Caco-2 (cell line): ENCODE measurements at regions of chr7 and their contacts with region 1.

Region 1: GRCh38 chr7:51430480-51431086 is 114.0 kb upstream of the COBL start:
- DNase-seq: peak; percentile 58 to 79
- H3K4me3 ChIP-seq: no peak overlapping the region
- H3K4me3 Mint-ChIP-seq: no peak overlapping the region
- H3K27ac Mint-ChIP-seq: no peak overlapping the region
- H3K4me1 ChIP-seq: no peaks in the 10 kb centered on the region
- H3K4me1 Mint-ChIP-seq: no peaks in the 10 kb centered on the region
- H3K27me3 ChIP-seq: no peaks in the 10 kb centered on the region; the same call in 1 of the 2 replicates
- H3K27me3 Mint-ChIP-seq: peaks cover 11% of the 10 kb centered on the region
- CTCF ChIP-seq: peak; percentile 82 to 90

Region 2: DNA sequence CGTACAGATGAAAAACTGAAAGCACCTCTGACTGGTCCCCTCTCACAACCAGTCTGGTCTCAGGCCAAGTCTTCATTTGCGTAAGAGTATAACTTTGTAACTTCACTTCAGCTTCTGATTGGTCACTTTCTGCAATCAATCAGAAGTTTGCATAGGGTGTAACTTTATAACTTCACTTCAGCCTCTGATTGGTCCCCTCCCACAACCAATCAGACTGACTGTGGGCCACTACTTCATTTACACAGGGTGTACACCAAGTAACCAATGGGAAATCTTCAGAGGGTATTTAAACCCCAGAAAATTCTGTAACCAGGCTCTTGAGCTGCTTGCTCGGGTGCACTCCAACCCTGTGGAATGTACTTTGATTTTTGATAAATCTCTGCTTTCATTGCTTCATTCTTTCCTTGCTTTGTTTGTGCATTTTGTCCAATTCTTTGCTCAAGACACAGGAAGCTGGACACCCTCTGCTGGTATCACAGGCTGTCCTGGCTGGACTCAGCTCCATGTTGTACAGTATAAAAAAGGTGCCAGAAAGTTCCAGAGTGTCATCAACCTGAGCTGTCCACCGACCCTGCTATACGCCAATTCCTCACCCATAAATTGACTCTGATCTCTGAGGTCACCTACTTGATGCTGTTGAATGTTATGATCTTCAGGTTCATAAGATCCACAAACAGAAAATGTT is 188.4 kb before region 1 on chr7:
- CTCF ChIA-PET with region 1: no interaction called
- POLR2A ChIA-PET with region 1: no interaction called
- intact Hi-C with region 1: no loop called
- DNase-seq: peak; percentile 46 to 53
- H3K4me3 ChIP-seq: no peak overlapping the region
- H3K4me3 Mint-ChIP-seq: no peak overlapping the region
- H3K27ac Mint-ChIP-seq: peak overlapping the region; percentile 3
- H3K4me1 ChIP-seq: peaks cover 36% of the 10 kb centered on the region
- H3K4me1 Mint-ChIP-seq: peaks cover 17% of the 10 kb centered on the region
- H3K27me3 ChIP-seq: no peaks in the 10 kb centered on the region
- H3K27me3 Mint-ChIP-seq: no peaks in the 10 kb centered on the region
- CTCF ChIP-seq: peak in 1 of 2 experiments; percentile 15

Region 3: GRCh38 chr7:51253161-51253560 is 177.4 kb before region 1 on chr7:
- CTCF ChIA-PET with region 1: no interaction called
- POLR2A ChIA-PET with region 1: no interaction called
- intact Hi-C with region 1: loop called (anchors 1 kb)
- DNase-seq: peak in 1 of 2 experiments; percentile 25
- H3K4me3 ChIP-seq: no peak overlapping the region
- H3K4me3 Mint-ChIP-seq: no peak overlapping the region
- H3K27ac Mint-ChIP-seq: no peak overlapping the region
- H3K4me1 ChIP-seq: peaks cover 37% of the 10 kb centered on the region
- H3K4me1 Mint-ChIP-seq: peaks cover 39% of the 10 kb centered on the region
- H3K27me3 ChIP-seq: no peaks in the 10 kb centered on the region
- H3K27me3 Mint-ChIP-seq: no peaks in the 10 kb centered on the region
- CTCF ChIP-seq: peak; percentile 28 to 36

Region 4: DNA sequence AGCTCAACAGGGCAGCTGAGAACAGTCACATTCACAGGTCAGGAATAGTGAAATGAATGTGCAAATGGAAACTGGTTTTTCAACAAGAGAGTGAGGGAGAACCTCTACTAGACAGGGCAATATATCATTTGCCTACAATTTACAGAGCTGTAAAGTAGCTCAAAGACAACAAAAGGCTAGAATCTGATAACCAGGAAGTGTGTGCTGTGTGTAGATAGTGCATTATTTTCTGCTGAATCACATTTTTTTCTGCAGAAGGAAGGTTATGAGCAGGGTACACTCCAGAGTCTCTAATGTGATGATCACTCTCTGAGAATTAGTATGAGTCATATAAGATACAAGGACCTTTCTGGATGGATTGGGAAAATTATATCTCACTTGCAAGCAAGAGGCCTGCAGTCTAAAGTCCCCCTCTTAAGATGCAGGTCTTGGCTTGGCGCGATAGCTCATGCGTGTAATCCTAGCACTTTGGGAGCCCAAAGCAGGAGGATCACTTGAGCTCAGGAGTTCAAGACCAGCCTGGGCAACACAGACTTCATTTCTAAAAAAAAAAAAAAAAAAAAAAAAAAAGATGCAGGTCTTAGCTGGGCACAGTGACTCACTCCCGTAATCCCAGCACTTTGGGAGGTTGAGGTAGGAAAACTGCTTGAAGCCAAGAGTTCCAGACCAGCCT is 54.0 kb before region 1 on chr7:
- CTCF ChIA-PET with region 1: interaction called, 11 read pairs
- POLR2A ChIA-PET with region 1: no interaction called
- intact Hi-C with region 1: no loop called
- DNase-seq: peak; percentile 74 to 79
- H3K4me3 ChIP-seq: no peak overlapping the region
- H3K4me3 Mint-ChIP-seq: peak overlapping the region; percentile 22
- H3K27ac Mint-ChIP-seq: peak overlapping the region; percentile 66
- H3K4me1 ChIP-seq: peaks cover 18% of the 10 kb centered on the region
- H3K4me1 Mint-ChIP-seq: peaks cover 9% of the 10 kb centered on the region
- H3K27me3 ChIP-seq: no peaks in the 10 kb centered on the region
- H3K27me3 Mint-ChIP-seq: no peaks in the 10 kb centered on the region
- CTCF ChIP-seq: no peak

Region 5: GRCh38 chr7:51666751-51667150 is 236.2 kb after region 1 on chr7:
- CTCF ChIA-PET with region 1: interaction called, 9 read pairs
- POLR2A ChIA-PET with region 1: no interaction called
- intact Hi-C with region 1: loop called (anchors 1 kb)
- DNase-seq: peak in 1 of 2 experiments; percentile 33
- H3K4me3 ChIP-seq: no peak overlapping the region
- H3K4me3 Mint-ChIP-seq: peak overlapping the region; percentile 48
- H3K27ac Mint-ChIP-seq: no peak overlapping the region
- H3K4me1 ChIP-seq: peaks cover 16% of the 10 kb centered on the region
- H3K4me1 Mint-ChIP-seq: peaks cover 8% of the 10 kb centered on the region
- H3K27me3 ChIP-seq: no peaks in the 10 kb centered on the region
- H3K27me3 Mint-ChIP-seq: peaks cover 2% of the 10 kb centered on the region
- CTCF ChIP-seq: no peak

Region 6: GRCh38 chr7:51693258-51693657 is 262.7 kb after region 1 on chr7:
- CTCF ChIA-PET with region 1: no interaction called
- POLR2A ChIA-PET with region 1: no interaction called
- intact Hi-C with region 1: loop called (anchors 10 kb)
- DNase-seq: no peak
- H3K4me3 ChIP-seq: no peak overlapping the region
- H3K4me3 Mint-ChIP-seq: no peak overlapping the region
- H3K27ac Mint-ChIP-seq: no peak overlapping the region
- H3K4me1 ChIP-seq: no peaks in the 10 kb centered on the region
- H3K4me1 Mint-ChIP-seq: no peaks in the 10 kb centered on the region
- H3K27me3 ChIP-seq: no peaks in the 10 kb centered on the region; the same call in 1 of the 2 replicates
- H3K27me3 Mint-ChIP-seq: peaks cover 3% of the 10 kb centered on the region
- CTCF ChIP-seq: no peak

Region 7: GRCh38 chr7:51789489-51789888 is 358.9 kb after region 1 on chr7:
- CTCF ChIA-PET with region 1: no interaction called
- POLR2A ChIA-PET with region 1: no interaction called
- intact Hi-C with region 1: loop called (anchors 2 kb)
- DNase-seq: no peak
- H3K4me3 ChIP-seq: no peak overlapping the region
- H3K4me3 Mint-ChIP-seq: no peak overlapping the region
- H3K27ac Mint-ChIP-seq: peak overlapping the region; percentile 39
- H3K4me1 ChIP-seq: no peaks in the 10 kb centered on the region
- H3K4me1 Mint-ChIP-seq: no peaks in the 10 kb centered on the region
- H3K27me3 ChIP-seq: no peaks in the 10 kb centered on the region
- H3K27me3 Mint-ChIP-seq: no peaks in the 10 kb centered on the region
- CTCF ChIP-seq: peak; percentile 44 to 53